GM10248 (cell line): ENCODE measurements at regions of chr2 and their contacts with region 1.

Region 1: GRCh38 chr2:71299507-71299906 is 32.1 kb upstream of the ZNF638 start:
- DNase-seq: peak; percentile 43
- CTCF ChIP-seq: peak; percentile 60

Region 2: DNA sequence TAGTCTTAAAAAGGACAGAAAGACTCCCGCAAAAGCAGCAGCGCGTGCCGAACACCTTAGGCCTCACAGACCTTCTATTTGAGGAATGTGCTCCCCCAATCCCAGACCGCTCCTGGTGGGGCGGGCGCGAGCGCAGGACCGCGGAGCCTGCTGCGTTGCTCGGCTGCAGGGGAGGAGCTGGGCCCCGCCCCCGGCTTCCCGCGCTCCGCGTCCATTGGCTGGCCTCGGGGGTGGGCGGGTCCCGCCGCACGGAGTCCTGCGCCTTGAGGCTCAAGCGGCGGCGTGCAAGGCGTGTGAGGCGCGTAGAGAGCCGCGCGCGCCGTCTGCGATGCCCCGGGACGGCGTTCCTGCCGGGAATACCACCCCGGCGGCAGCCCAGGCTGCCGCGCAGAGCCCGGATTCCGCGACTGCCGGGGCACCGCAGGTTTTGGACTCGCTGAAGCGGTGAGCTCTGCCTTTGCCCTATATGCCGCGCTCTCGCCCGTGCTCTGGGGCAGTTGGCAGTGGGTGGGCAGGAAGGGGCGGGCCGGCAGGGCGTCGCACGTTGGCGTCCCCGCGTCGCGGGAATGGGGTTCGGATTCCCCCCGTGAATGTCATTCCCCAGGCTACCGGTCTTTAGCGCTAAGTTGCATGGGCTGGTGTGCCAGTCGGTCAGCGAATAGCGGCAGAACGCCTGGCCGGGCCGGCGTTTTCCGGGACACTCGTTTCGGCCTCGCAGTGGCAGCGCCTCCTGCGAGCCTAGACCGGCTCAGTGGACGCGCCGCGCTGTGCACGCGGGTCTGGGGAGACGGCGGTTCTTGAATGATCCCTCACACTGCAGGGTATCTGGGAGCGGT is 23.0 kb before region 1 on chr2:
- CTCF ChIA-PET with region 1: interaction called, 11 read pairs
- POLR2A ChIA-PET with region 1: no interaction called
- DNase-seq: peak; percentile 92
- CTCF ChIP-seq: no peak

Region 3: GRCh38 chr2:71323386-71323785 is 23.9 kb after region 1 on chr2:
- CTCF ChIA-PET with region 1: interaction called, 21 read pairs
- POLR2A ChIA-PET with region 1: no interaction called
- DNase-seq: no peak
- CTCF ChIP-seq: no peak

Region 4: DNA sequence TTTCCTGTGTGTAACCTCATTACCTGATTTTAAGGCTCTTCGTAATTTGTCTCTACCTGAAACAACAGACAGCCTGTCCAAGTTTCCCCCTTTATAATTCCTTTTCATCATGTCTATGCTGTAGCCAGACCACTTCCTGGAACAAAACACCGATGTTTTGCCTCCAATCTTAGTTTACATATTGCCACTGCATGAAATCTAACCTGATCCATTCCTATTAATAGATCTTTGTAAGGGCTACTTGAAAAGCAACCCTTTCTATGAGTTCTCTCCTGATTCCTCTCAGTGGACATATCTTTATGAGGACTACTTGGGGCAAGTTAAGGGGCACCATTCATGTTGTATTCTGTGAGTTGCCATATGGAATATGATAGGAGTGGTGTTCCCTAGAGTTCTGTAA is 62.9 kb after region 1 on chr2:
- CTCF ChIA-PET with region 1: no interaction called
- POLR2A ChIA-PET with region 1: no interaction called
- DNase-seq: no peak
- CTCF ChIP-seq: no peak

Region 5: DNA sequence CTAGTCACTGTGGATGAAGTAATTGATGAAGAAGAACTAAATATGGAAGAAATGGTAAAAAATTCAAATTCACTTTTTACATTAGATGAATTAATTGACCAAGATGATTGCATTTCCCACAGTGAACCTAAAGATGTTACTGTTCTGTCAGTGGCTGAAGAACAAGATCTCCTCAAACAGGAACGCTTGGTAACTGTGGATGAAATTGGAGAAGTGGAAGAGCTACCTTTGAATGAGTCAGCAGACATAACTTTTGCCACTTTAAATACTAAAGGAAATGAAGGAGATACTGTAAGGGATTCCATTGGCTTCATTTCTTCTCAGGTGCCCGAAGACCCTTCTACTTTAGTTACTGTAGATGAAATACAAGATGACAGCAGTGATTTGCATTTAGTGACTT is 127.2 kb after region 1 on chr2:
- CTCF ChIA-PET with region 1: no interaction called
- POLR2A ChIA-PET with region 1: no interaction called
- DNase-seq: no peak
- CTCF ChIP-seq: no peak

Region 6: DNA sequence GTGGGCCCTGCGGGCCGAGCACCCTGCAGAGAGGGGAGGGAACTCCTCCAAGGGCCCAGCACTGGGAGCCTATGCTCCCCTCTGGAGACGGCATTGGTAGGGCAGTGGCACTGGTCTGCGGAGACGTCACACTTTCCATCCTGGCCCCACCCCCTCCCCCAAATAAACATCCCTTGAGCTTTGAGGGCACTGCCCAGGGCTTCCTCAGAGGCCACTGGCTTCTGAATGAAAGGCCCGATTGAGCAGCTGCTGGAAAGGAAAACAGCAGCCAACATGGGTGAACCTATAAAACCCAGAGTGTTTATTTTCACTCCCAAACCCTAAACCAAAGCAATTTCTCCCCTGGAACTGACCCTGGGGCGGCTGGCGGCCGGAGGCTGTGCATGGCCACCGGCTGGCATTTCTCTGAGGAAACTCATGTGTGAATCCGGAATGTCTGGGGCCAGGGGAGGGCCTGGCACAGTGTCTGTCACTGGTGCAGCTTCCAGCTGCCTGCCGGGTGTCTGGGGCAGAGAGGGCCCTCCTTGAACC is 292.7 kb after region 1 on chr2:
- CTCF ChIA-PET with region 1: no interaction called
- POLR2A ChIA-PET with region 1: no interaction called
- DNase-seq: no peak
- CTCF ChIP-seq: no peak